Activated CD4-positive, alpha-beta T cell treated with anti-CD3 and anti-CD28 coated beads for 36 hours (primary cell): ENCODE measurements at regions of chr12 and their contacts with region 1.

Region 1: DNA sequence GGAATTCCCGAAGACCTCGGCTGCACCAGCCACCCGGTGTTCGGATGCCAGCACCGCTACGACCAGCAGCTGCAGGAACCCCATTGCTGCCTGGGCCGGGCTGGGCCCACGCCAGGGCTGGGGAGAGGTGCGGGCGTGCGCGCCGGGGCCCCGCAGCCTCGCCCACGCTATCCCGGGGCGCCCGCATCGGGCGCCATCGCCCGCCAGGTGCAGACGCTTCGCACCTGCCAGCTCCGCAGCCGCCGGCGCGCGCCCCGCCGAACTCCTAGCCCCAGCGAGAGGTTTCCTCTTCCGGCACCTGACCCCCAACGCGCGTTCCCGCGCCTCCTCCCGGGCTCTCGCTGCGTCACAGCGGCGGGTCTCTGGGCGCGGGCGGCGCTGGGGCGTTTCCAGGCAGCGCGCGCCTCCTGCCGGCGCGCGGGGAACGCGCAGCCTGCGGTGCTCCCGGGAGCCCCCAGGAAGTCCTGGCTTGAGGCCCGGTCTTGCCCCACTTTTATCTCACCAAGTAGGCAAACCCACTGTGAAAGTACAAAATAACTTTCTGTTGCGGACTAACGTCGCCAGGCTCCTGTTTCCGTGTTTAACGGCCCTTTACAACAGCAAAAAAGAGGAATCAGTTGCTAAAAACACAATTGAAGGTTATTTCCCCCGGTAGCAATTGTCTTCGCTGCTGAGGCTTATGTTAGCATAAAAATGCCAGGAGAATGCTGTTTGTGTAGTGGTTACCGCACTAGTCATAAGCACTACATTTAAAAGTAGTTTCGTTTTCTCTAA is at the start of gene TM7SF3:
- DNase-seq: peak; percentile 97
- ATAC-seq: peak; percentile 83
- H3K4me3 Mint-ChIP-seq: peak within 1 kb of the TSS; percentile 86
- H3K27ac Mint-ChIP-seq: peak within 1 kb of the TSS; percentile 82
- H3K4me1 Mint-ChIP-seq: peaks cover 45% of the 10 kb centered on the region
- H3K27me3 Mint-ChIP-seq: no peaks in the 10 kb centered on the region
- total RNA-seq, gene TM7SF3: 29.4 to 34.0 TPM

Region 2: GRCh38 chr12:26126340-26127284 is 887.7 kb before region 1 on chr12:
- CTCF ChIA-PET with region 1: no interaction called
- POLR2A ChIA-PET with region 1: no interaction called
- intact Hi-C with region 1: loop called in 1 of 2 experiments (anchors 5 kb)
- DNase-seq: peak; percentile 70
- ATAC-seq: peak; percentile 55
- H3K4me3 Mint-ChIP-seq: peak overlapping the region; percentile 77
- H3K27ac Mint-ChIP-seq: no peak overlapping the region
- H3K4me1 Mint-ChIP-seq: peaks cover 26% of the 10 kb centered on the region
- H3K27me3 Mint-ChIP-seq: peaks cover 72% of the 10 kb centered on the region

Region 3: DNA sequence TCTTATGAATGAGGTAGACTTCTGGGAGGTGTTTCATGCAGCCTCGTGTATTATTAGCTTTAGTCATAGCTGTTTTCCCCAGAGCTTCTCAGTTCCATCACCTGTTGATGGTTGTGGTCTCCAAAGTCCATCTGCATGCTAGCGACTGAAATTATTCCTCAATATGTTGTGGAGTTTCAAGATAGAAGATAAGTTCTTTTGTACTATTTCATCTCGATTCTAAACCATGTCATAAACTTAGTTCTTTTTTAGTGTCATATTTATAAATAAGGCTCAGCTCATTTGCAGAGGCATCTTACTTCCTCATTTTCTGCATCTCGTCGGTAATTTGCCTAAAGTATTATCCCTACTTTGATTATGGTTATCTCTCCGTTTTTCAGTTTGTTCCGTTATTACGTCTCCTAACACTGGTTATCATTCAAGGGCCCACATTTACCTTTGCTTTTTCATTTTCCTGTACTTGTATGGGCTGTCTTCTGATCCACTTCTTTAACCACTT is 300.3 kb before region 1 on chr12:
- CTCF ChIA-PET with region 1: no interaction called
- POLR2A ChIA-PET with region 1: no interaction called
- intact Hi-C with region 1: no loop called
- DNase-seq: no peak
- ATAC-seq: no peak
- H3K4me3 Mint-ChIP-seq: no peak overlapping the region
- H3K27ac Mint-ChIP-seq: no peak overlapping the region
- H3K4me1 Mint-ChIP-seq: no peaks in the 10 kb centered on the region
- H3K27me3 Mint-ChIP-seq: no peaks in the 10 kb centered on the region

Region 4: DNA sequence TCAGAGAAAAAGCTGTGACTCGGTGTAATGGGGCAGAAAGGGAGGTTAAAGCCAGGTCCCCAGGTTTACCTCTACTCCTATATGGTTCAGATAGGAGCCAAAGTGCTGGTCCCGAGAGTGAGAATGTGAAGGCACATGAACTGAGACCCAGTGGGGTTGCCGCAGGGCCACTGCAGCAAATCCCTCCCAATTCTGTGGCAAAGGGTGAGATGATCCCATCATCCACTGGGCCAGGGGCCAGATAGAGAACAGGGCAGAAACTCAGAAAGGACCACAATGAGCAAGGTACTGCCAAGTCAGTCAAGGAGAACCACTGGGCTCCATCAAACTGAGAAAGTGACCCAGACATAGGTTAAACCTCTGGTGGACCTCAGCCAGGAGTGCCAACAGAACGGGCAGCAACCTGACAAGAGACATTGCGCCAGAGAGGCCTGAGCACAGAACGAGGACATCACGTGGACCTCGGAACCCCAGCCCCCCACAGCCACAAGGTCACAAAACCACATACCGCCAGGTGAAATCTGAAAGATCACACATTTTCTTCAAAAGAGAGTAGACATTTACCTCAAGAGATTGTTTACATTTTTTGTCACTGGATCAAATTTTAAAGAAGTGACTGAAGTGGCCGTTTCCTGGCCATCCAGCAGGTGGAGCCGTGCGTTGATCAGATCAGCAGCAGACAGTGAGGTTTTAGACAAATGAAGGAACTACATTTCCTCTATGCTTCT is 160.8 kb before region 1 on chr12:
- CTCF ChIA-PET with region 1: no interaction called
- POLR2A ChIA-PET with region 1: no interaction called
- intact Hi-C with region 1: loop called (anchors 1 kb)
- DNase-seq: peak; percentile 84
- ATAC-seq: peak; percentile 93
- H3K4me3 Mint-ChIP-seq: no peak overlapping the region
- H3K27ac Mint-ChIP-seq: no peak overlapping the region
- H3K4me1 Mint-ChIP-seq: no peaks in the 10 kb centered on the region
- H3K27me3 Mint-ChIP-seq: peaks cover 1% of the 10 kb centered on the region

Region 5: GRCh38 chr12:26953447-26953846 is 60.8 kb before region 1 on chr12:
- CTCF ChIA-PET with region 1: interaction called, 15 read pairs
- POLR2A ChIA-PET with region 1: no interaction called
- intact Hi-C with region 1: no loop called
- DNase-seq: no peak
- ATAC-seq: peak; percentile 30
- H3K4me3 Mint-ChIP-seq: no peak overlapping the region
- H3K27ac Mint-ChIP-seq: no peak overlapping the region
- H3K4me1 Mint-ChIP-seq: peaks cover 36% of the 10 kb centered on the region
- H3K27me3 Mint-ChIP-seq: no peaks in the 10 kb centered on the region

Region 6: GRCh38 chr12:27024291-27024690 is 10.0 kb after region 1 on chr12:
- CTCF ChIA-PET with region 1: interaction called, 10 read pairs
- POLR2A ChIA-PET with region 1: interaction called, 5 read pairs
- intact Hi-C with region 1: loop called (anchors 1 kb)
- DNase-seq: no peak
- ATAC-seq: no peak
- H3K4me3 Mint-ChIP-seq: peak overlapping the region; percentile 96
- H3K27ac Mint-ChIP-seq: no peak overlapping the region
- H3K4me1 Mint-ChIP-seq: peaks cover 30% of the 10 kb centered on the region
- H3K27me3 Mint-ChIP-seq: peaks cover 4% of the 10 kb centered on the region

Region 7: DNA sequence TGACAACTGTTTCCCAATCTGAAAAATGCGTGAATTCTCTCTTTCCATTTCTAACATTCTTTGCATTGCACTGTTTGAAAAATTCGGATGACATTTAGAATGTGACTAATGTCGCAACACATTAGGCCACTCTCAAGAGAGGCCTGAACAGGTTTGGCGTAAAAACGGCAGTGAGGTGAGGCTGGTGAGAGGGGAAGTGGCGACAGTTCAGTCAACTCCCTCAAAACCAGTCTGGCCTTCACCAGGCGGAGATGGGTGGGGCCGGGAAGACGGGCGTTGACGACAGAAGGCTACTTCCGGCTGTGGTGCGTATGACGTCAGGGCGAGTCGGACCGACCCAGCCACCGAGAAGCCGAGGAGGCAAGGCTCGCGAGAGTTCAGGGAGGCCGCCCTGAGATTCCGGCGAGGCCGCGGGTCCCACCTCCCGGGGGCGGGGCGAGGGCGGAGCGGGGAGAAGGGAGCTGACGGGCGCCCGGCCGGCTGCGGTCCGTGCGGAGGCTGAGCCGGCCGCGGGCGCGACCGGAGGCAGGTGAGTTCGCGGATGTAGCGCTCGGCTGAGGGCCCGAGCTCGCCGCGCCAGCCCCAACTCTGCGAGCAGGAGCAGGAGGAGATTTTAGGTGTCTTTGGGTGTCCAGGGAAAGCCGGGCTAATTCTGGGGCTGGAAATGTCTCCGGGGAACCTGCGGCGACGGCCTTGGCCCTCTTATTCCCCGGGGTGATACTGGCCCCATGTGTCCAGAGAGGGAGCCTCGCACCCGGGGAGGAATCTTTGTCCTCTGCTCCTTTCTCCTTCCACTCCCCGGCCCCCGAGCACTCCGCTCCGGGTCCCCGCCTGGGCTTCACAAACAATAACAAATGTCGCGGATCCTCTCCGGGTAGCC is 229.8 kb after region 1 on chr12 and contains the start of gene STK38L:
- CTCF ChIA-PET with region 1: no interaction called
- POLR2A ChIA-PET with region 1: no interaction called
- intact Hi-C with region 1: loop called in 1 of 2 experiments (anchors 1 kb)
- DNase-seq: peak; percentile 99
- ATAC-seq: peak; percentile 96
- H3K4me3 Mint-ChIP-seq: peak within 1 kb of the TSS; percentile 95
- H3K27ac Mint-ChIP-seq: peak within 1 kb of the TSS; percentile 98
- H3K4me1 Mint-ChIP-seq: peaks cover 48% of the 10 kb centered on the region
- H3K27me3 Mint-ChIP-seq: no peaks in the 10 kb centered on the region
- total RNA-seq, gene STK38L: 24.9 to 30.4 TPM

Region 8: DNA sequence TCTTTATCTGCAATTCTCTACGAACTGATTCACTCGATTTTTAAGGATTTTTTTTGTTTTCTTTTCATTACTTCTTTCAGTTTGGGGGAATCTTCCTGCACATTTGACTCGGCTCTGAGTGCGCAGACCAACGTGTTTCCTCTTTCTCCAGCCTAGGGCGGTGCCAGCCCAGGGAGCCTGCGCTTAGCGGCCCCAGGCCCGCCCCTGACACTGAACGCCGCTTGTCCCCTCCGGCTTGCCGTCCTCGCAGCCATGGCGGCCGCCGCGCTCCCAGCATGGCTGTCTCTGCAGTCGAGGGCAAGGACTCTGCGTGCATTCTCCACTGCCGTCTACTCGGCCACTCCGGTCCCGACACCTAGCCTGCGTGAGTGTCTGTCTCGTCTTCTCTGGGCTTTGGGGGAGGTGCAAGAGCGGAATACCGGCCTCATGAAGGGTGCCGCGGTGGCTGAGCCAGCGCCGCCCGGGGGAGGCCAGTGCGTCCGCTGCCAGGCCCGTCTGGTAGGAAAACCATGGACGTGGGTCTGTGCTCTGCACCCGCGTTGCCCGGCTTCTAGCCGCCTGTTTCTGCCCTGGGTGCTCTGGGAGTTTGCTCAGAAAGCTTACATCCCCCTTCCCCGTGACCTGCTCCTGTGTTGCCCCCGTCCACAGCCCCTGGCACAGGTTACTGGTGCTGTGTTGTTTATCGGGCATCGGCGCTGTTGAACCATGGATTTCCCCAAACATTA is 696.5 kb after region 1 on chr12 and contains the start of gene MRPS35:
- CTCF ChIA-PET with region 1: no interaction called
- POLR2A ChIA-PET with region 1: no interaction called
- intact Hi-C with region 1: loop called (anchors 5 to 10 kb)
- DNase-seq: peak; percentile 95
- ATAC-seq: peak; percentile 98
- H3K4me3 Mint-ChIP-seq: peak within 1 kb of the TSS; percentile 94
- H3K27ac Mint-ChIP-seq: peak within 1 kb of the TSS; percentile 94
- H3K4me1 Mint-ChIP-seq: peaks cover 28% of the 10 kb centered on the region
- H3K27me3 Mint-ChIP-seq: no peaks in the 10 kb centered on the region
- total RNA-seq, gene MRPS35: 58.5 to 62.1 TPM